ENCODE measurements at regions of chr14 and their contacts with region 1.

Region 1: GRCh38 chr14:89416002-89416995 is 734 bp downstream of the FOXN3 start:
- DNase-seq: peak; percentile 100

Region 2: DNA sequence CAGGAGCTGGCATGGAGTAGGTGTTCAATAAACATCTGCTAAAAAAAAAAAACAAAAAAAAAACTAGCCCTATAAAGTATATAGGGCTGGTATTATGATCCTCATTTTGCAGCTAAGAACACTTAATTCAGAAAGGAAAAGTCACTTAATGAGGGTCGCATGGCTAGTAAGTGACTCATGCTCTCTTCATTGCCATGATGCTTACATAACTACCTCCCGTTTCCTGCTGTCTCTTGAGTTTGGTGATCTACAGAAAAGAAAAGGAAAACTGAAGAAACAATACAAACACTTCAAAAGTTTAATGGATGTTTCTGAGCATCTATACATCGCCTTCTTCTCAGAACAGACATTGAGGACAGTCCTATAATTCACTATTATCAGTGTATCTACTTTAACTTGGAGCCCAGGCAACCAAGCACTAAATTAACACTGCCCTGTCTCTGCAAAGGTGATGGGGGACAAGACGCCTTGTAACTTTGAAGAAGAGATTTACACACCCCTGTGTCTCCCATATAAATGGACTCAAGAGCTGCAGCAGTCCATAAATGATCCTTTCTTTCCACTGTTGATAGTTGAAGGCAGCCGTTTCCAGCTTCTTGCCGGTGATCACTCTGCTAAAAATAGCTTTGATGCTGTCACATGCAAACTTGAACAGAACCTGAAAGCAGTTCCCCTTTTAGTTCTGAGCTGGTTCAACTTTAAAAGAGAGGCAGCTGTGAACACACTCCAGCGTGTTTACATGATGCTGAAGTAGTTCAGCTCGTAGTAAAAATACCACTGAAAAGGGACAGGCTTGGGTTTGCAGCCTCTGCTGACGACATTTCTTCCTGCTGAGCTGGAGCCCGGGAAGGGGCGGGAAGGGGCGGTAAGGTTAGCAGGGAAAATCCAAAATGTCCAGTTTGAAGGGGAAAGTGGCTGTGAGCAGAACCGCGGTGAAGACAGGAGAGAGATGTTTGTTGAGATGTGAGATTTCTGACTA is 112.6 kb before region 1 on chr14:
- intact Hi-C with region 1: loop called in 1 of 2 experiments (anchors 10 kb)
- DNase-seq: peak; percentile 90

Region 3: GRCh38 chr14:89368490-89369477 is 47.5 kb before region 1 on chr14:
- intact Hi-C with region 1: loop called in 1 of 2 experiments (anchors 1 kb)
- DNase-seq: no peak

Region 4: GRCh38 chr14:89399594-89400068 is 16.7 kb before region 1 on chr14:
- intact Hi-C with region 1: loop called in 1 of 2 experiments (anchors 2 kb)
- DNase-seq: no peak

Measured in posterior vena cava (tissue), 2 donors.